ENCODE measurements at regions of chr3 and their contacts with region 1.

Region 1: DNA sequence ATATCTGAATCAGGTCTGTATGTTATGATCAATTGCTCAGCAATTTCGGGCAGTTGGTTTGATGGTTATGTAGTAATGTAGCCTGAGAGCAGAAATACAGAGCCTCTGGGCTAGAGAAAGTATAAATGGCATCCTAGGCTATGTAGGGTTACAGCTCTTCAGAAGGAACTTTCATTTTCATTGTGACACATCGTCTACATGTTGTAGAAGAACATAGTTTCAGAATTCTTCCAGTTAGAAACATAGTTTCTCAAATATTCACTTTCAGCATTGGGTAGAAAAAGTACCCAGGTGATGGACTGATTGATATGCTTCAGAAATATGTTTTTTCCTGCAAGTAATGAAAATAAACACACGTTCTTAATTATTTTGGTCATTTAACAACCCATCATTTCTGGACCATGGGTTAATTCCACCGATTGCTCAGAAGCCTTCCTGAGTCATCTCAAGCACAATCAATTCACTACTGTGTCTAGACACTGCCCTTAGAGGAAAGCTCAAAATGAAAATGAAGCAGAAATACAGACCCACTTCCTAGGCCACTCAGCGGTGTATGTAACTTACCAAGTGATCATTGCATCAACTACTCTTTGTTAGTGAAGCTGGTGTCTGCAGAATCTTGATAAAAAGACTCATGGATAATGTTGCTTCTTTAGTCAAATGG is 88.8 kb upstream of the TSEN2 start:
- DNase-seq: peak; percentile 11
- H3K4me3 Mint-ChIP-seq: peak overlapping the region; percentile 57
- H3K27ac Mint-ChIP-seq: peak overlapping the region; percentile 75
- H3K4me1 Mint-ChIP-seq: peaks cover 21% of the 10 kb centered on the region
- H3K27me3 Mint-ChIP-seq: peaks cover 15% of the 10 kb centered on the region

Region 2: GRCh38 chr3:12193485-12194165 is 201.9 kb before region 1 on chr3:
- intact Hi-C with region 1: loop called (anchors 1 kb)
- DNase-seq: peak; percentile 34
- H3K4me3 Mint-ChIP-seq: peak overlapping the region; percentile 54
- H3K27ac Mint-ChIP-seq: peak overlapping the region; percentile 95
- H3K4me1 Mint-ChIP-seq: peaks cover 77% of the 10 kb centered on the region
- H3K27me3 Mint-ChIP-seq: no peaks in the 10 kb centered on the region

Region 3: GRCh38 chr3:12308517-12308916 is 87.0 kb before region 1 on chr3:
- intact Hi-C with region 1: loop called (anchors 1 kb)
- DNase-seq: no peak
- H3K4me3 Mint-ChIP-seq: no peak overlapping the region
- H3K27ac Mint-ChIP-seq: peak overlapping the region; percentile 82
- H3K4me1 Mint-ChIP-seq: peaks cover 34% of the 10 kb centered on the region
- H3K27me3 Mint-ChIP-seq: peaks cover 3% of the 10 kb centered on the region

Region 4: DNA sequence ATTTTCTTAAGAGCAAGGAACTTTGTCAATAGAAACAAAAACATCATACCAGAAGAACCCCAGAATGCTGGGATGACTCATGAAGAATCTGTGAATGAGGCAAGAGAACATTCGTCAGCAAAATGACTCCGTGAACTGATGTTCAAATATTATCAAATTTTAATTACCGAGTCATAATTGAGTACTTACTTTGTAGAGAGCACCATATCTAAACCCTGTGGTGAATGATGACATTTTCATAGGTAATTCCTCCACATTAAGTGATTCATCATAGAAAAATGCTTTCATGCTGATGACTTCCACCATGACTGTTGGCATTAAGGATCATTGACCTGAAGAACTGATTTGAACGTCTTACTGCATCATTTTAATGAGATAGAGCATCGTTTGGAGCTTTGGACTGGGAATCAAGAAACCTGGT is 50.3 kb before region 1 on chr3:
- intact Hi-C with region 1: loop called (anchors 1 kb)
- DNase-seq: no peak
- H3K4me3 Mint-ChIP-seq: no peak overlapping the region
- H3K27ac Mint-ChIP-seq: peak overlapping the region; percentile 79
- H3K4me1 Mint-ChIP-seq: peaks cover 18% of the 10 kb centered on the region
- H3K27me3 Mint-ChIP-seq: peaks cover 5% of the 10 kb centered on the region

Region 5: GRCh38 chr3:12423918-12424630 is 28.6 kb after region 1 on chr3:
- intact Hi-C with region 1: loop called (anchors 1 kb)
- DNase-seq: no peak
- H3K4me3 Mint-ChIP-seq: no peak overlapping the region
- H3K27ac Mint-ChIP-seq: peak overlapping the region; percentile 66
- H3K4me1 Mint-ChIP-seq: peaks cover 52% of the 10 kb centered on the region
- H3K27me3 Mint-ChIP-seq: no peaks in the 10 kb centered on the region

Region 6: DNA sequence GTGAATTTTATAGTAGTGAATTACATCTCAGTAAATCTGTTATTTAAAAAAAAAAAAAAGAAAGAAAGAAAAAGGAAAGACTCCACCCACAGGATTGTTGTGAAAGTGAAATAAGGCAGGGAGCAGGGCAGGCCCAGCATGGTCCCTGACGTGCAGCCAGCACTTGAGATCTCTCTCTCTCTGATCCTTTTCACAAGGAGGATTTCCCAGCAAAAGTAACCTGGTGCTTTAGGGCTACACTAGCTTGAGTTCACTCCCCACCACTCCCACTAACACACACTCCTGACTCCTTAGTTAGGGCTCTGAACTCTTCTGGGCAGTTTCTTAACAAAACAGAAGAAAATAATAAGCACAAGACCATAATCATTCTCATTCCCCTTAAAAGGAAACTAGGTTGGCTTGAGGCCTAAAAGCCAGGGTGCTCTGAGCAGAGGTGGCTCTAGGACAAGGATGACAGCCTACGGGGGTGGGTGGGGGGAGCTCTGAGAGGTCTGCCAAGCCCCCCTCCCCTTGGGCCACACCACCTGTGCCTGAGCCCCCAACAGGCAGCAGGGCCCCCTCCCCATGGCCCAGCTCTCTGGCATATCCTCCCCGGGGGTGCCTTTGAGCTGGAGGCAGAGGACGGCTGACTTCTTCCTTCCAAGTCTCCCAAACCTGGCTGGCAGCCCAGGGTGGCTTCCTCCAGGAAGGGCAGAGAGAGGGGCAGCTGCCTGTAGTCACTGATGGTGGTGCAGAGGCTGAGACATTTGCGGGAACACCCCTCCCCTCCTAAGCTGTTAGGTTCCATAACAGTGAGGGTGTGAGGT is 362.7 kb after region 1 on chr3:
- intact Hi-C with region 1: no loop called
- DNase-seq: no peak
- H3K4me3 Mint-ChIP-seq: no peak overlapping the region
- H3K27ac Mint-ChIP-seq: no peak overlapping the region
- H3K4me1 Mint-ChIP-seq: peaks cover 3% of the 10 kb centered on the region
- H3K27me3 Mint-ChIP-seq: peaks cover 5% of the 10 kb centered on the region

Measured in activated T-helper 2 cell treated with anti-CD3 and anti-CD28 coated beads, Interferon-gamma antibody, Interleukin-2, Interleukin-4, amounts not matched to agents 10 μg/mL and 5 μg/mL and 100 μg/mL, durations not matched to agents 14 hours and 24 hours and 36 hours (primary cell).